PC-3 (cell line): ENCODE measurements at regions of chr3 and their contacts with region 1.

Region 1: DNA sequence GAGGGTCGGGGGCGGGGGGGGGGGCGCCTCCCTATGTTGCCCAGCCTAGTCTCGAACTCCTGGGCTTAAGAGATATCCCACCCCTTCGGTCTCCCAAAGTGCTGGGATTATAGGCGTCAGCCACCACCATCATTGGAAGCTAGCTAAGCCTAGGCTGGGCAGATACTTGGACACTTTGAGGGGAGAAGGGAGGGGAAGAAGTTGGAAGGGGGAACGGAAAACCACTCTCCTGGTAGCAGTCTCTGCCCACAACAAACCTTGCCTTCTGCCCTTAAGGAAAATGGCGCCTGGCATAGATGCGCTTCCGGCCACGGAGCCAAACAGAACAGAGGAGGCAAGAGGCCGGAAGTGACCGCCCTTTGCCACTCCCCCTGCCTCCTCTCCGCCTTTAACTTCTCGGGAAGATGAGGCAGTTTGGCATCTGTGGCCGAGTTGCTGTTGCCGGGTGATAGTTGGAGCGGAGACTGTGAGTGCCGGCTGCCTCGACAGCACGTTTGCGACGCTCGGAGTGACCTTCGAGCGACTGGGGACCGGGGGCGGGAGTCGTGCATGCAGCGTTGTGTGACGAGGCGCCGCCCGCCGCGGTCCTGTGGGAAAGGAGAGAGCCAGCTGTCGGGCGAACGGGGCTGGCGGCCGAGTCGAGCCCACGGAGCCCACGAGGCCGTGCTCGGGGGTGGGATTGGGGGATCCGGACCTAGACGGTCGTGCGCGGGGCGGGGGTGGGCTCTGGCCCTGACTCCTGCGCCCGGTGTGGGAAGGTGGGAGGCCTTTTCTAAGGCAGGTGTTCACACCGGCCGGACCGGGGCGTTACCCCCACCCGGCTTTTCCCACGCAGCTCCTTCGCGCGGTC is at the start of gene MFN1:
- DNase-seq: peak; percentile 94
- ATAC-seq: peak; percentile 93
- H3K4me3 ChIP-seq: peak within 1 kb of the TSS; percentile 89
- H3K27ac ChIP-seq: peak within 1 kb of the TSS; percentile 12; the same call in 1 of the 2 replicates
- H3K4me1 ChIP-seq: peaks cover 13% of the 10 kb centered on the region
- H3K27me3 ChIP-seq: no peaks in the 10 kb centered on the region
- CTCF ChIP-seq: no peak
- total RNA-seq, gene MFN1: 41.2 and 42.8 TPM in 2 replicates

Region 2: DNA sequence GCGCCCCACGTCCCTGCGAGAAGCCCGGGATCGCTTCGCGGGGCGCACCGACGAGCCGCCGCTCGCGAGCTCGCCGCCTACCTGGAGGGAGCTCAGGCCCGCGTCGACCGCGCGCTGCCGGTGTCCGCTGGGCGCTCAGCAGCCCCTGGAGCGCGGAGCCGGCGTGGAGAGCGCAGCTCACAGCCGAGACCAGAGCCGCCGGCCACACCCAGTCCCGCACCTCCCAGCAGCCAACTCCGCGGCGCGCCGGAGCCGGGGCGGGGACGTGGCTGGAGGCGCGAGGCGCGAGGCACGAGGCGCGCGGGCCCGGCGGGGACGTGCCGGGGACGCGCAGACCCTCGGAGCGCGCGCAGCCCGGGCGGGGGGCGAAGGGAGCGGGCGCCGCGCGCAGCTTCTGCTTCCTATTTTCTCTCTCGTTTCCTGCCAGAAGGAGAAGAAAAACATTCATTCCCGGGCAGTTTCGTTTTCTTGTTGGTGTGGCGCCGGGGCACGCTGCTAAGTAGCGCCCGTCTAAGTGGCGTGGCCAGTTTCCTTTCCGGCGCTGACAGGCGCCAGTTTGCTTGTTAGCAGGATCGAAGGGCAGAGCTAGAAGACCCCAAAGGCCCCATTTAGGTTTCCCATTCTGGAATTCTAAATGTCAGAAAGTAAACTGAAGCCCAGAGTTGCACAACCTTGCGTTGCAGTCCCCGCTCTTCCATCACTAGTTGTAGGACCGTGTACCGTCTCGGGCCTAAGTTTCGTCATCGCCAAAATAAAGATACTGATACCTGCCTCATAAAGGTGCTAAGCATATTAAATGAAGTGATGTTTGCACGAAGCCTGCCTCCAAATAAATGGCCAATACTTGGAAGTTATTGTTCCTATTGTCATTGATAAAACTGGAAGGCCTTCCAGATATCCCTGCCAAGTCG is 104.0 kb after region 1 on chr3 and contains the start of gene GNB4:
- CTCF ChIA-PET with region 1: no interaction called
- POLR2A ChIA-PET with region 1: no interaction called
- intact Hi-C with region 1: loop called (anchors 5 kb)
- DNase-seq: peak; percentile 70
- ATAC-seq: peak; percentile 91
- H3K4me3 ChIP-seq: peak within 1 kb of the TSS; percentile 82
- H3K27ac ChIP-seq: no peak within 1 kb of the TSS
- H3K4me1 ChIP-seq: peaks cover 5% of the 10 kb centered on the region
- H3K27me3 ChIP-seq: peaks cover 47% of the 10 kb centered on the region
- CTCF ChIP-seq: no peak
- total RNA-seq, gene GNB4: 5.2 and 6.3 TPM in 2 replicates

Region 3: GRCh38 chr3:179544981-179545645 is 197.5 kb after region 1 on chr3:
- CTCF ChIA-PET with region 1: no interaction called
- POLR2A ChIA-PET with region 1: no interaction called
- intact Hi-C with region 1: no loop called
- DNase-seq: peak; percentile 52
- ATAC-seq: peak; percentile 43
- H3K4me3 ChIP-seq: no peak overlapping the region
- H3K27ac ChIP-seq: peak overlapping the region; percentile 31
- H3K4me1 ChIP-seq: no peaks in the 10 kb centered on the region
- H3K27me3 ChIP-seq: no peaks in the 10 kb centered on the region
- CTCF ChIP-seq: no peak

Region 4: GRCh38 chr3:179580992-179581391 is 233.4 kb after region 1 on chr3:
- CTCF ChIA-PET with region 1: no interaction called
- POLR2A ChIA-PET with region 1: interaction called, 13 read pairs
- intact Hi-C with region 1: no loop called
- DNase-seq: no peak
- ATAC-seq: no peak
- H3K4me3 ChIP-seq: no peak overlapping the region
- H3K27ac ChIP-seq: no peak overlapping the region
- H3K4me1 ChIP-seq: no peaks in the 10 kb centered on the region
- H3K27me3 ChIP-seq: no peaks in the 10 kb centered on the region
- CTCF ChIP-seq: no peak